ENCODE measurements at regions of chr12 and their contacts with region 1.

Region 1: DNA sequence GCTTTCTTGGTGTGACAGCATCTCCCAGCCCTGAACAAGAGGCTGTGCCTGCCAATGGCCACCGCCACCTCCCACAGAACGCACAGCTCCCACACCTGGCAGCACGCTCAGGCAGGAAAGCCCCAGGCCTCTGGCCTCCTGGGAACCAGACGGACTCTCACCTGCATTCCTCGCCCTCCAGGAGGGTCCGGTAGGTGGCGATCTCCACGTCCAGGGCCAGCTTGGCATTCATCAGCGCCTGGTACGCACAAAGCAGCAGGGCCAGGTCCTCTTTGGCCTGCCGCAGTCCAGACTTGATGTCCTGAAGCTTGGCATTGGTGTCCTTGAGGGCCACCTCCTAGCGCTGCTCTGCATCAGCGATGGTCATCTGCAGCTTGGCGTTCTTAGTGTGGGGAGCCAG is 12.1 kb upstream of the KRT77 start:
- DNase-seq: peak in 1 of 2 experiments; percentile 78
- H3K4me3 ChIP-seq: no peak overlapping the region
- H3K27ac ChIP-seq: no peak overlapping the region
- H3K4me1 ChIP-seq: peaks cover 0 to 7% (median 0%) of the 10 kb centered on the region in 4 experiments; a peak in 3 of 7 replicates
- H3K27me3 ChIP-seq: peaks cover 8 to 32% (median 26%) of the 10 kb centered on the region in 4 experiments
- CTCF ChIP-seq: peak; percentile 66 to 74 (median 71)
- EP300 ChIP-seq: no peak
- POLR2A ChIP-seq: no peak
- RAD21 ChIP-seq: peak; percentile 44 to 67

Region 2: GRCh38 chr12:52870351-52871290 is 155.2 kb after region 1 on chr12:
- CTCF ChIA-PET with region 1: interaction called, 30 read pairs
- POLR2A ChIA-PET with region 1: no interaction called
- DNase-seq: peak in 1 of 2 experiments; percentile 98
- H3K4me3 ChIP-seq: no peak overlapping the region
- H3K27ac ChIP-seq: no peak overlapping the region
- H3K4me1 ChIP-seq: no peaks in the 10 kb centered on the region; a peak in 4 of 7 replicates
- H3K27me3 ChIP-seq: peaks cover 0 to 22% (median 12%) of the 10 kb centered on the region in 4 experiments; a peak in 5 of 7 replicates
- CTCF ChIP-seq: peak; percentile 86 to 98 (median 90)
- EP300 ChIP-seq: no peak
- POLR2A ChIP-seq: no peak
- RAD21 ChIP-seq: peak; percentile 96 to 98